AG04449 (cell line): ENCODE measurements at regions of chr12 and their contacts with region 1.

Region 1: DNA sequence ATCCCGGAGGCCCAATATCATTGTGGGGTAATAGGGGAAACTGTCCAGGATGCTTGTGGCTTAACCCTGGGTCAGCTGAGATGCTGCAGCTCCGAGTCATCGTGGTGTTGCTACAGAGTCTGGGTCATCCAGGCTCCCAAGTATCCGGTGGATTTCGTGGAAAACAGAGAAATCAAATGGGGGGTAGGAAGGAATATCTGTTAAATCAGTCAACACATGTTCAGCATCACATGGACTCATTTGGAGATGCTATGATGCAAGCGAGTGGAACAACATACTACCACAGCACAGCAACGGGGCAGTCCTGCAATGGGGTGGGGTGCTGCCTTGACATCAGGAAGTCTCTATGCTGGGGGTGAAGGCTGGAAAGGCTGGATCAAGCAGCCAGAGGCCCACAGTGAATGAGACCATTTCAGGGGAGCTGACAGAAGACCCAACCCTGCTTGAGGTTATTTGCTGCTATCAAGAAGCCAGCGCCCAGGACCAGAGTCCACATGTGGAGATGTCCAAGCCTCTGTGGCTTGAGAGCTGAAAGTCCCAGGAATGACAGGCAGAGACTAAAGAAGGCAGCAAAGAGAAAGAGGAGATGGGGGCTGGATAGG is 22.9 kb downstream of the VDR start:
- DNase-seq: peak; percentile 97
- H3K4me3 ChIP-seq: no peak overlapping the region
- CTCF ChIP-seq: no peak

Region 2: GRCh38 chr12:47870175-47870781 is 11.6 kb before region 1 on chr12:
- CTCF ChIA-PET with region 1: interaction called, 39 read pairs
- POLR2A ChIA-PET with region 1: interaction called, 3 read pairs
- DNase-seq: no peak
- H3K4me3 ChIP-seq: no peak overlapping the region
- CTCF ChIP-seq: peak; percentile 46

Region 3: GRCh38 chr12:47904713-47905310 is 22.9 kb after region 1 on chr12 and contains the start of gene VDR:
- CTCF ChIA-PET with region 1: interaction called, 11 read pairs
- POLR2A ChIA-PET with region 1: interaction called, 4 read pairs
- DNase-seq: no peak
- H3K4me3 ChIP-seq: peak within 1 kb of the TSS; percentile 72
- CTCF ChIP-seq: peak; percentile 11